ENCODE measurements at regions of chr1 and their contacts with region 1.

Region 1: DNA sequence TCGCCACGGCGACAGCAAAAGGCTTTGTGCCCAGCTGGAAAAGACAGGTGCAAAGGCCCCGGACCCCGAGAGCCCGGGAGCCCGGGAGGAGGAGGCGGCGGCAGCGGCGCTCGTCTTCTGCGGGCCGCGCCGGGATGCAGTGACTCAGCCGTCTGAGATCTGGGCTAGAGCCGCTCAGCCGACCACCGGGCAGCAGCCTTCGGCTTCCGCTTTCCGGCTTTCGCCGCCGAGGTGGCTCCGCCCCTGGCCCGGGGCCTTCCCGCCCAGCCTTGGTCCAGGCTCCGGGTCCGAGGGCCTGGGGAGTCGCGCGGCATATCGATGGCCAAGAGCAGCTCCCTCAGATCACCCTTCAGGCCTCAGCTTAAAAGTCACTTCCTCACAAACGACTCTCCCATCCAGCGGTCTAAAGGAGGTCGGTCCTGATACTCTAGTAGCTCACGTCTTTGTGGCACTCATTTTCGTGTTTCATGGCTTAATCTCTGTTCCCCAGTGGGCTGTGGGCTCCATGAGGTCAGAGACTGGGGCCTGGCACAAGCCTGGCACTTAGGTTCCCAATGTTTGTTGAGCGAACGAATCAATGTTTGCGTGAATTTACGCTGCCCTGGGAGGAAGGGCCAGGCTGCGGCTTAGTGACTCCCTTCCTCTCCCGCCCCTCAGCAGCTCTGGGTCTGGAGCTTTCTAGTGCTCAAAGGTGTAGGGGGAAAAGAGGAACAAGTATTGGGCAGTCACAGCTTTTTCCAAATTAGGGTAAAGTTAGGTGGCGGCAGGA is at the start of gene PHTF1:
- DNase-seq: peak; percentile 73 to 87 (median 83)
- ATAC-seq: peak; percentile 91
- H3K4me3 ChIP-seq: peak within 1 kb of the TSS; percentile 70
- H3K4me1 ChIP-seq: no peaks in the 10 kb centered on the region
- CTCF ChIP-seq: no peak
- total RNA-seq, gene PHTF1: 8.7 to 14.6 (median 10.8) TPM

Region 2: GRCh38 chr1:113811888-113812660 is 52.6 kb after region 1 on chr1 and contains the start of gene RSBN1:
- intact Hi-C with region 1: loop called in 1 of 2 experiments (anchors 10 kb)
- DNase-seq: peak; percentile 99
- ATAC-seq: peak; percentile 92
- H3K4me3 ChIP-seq: peak within 1 kb of the TSS; percentile 97
- H3K4me1 ChIP-seq: peaks cover 34% of the 10 kb centered on the region
- CTCF ChIP-seq: peak; percentile 42
- total RNA-seq, gene RSBN1: 24.1 to 36.5 (median 28.3) TPM